Lower leg skin (tissue), 4 donors: ENCODE measurements at regions of chr9 and their contacts with region 1.

Region 1: DNA sequence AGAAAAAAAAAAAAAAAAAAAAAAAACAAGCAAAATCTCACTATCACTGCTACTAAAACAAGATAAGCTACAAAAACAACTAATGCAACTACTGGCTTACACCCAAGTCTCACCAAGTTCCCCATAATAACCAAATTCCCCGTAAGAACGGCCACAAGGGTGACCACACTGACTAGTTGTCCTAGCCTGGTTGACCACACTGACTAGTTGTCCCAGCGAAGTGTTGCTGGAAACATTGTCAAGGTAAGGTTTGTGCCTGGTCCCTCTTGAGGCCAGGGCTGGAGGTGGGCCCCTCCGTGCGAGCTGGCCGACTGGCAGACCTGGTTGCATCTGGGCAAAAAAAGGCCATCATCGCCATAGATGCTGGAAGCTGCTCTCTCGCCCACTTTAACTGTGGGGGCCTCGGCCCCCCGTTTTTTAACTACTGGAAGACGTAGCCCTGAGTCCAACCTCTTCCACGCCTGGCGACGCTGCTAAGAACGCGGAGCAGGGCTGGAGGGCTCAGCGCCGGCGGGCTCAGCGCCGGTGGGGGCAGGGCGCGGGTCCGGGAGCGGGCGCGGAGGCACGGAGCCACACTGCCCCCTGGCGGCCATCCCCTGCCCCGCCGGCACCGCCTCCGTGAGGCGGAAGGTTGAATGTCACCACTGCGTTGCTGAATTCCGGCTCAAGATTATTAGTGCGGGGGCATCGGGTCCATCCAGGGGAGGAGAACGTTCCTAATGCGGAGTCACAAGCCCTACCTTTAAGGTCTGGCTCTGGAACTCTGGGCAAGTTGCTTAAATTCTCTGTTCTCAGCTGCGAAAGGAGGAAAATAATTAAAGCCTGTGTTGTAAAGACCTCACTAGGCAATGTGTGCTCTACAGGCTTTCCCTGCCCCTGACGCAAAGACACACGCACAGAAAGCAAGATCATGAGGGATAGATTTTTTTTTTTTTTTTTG is 84.0 kb downstream of the HSD17B3 start:
- DNase-seq: peak; percentile 43 to 94
- H3K4me3 ChIP-seq: no peak overlapping the region
- CTCF ChIP-seq: peak in 1 of 3 donors; percentile 73
- POLR2A ChIP-seq: no peak

Region 2: GRCh38 chr9:94668418-94668932 is 1549.5 kb before region 1 on chr9:
- intact Hi-C with region 1: loop called (anchors 10 kb)
- DNase-seq: no peak
- H3K4me3 ChIP-seq: no peak overlapping the region
- CTCF ChIP-seq: no peak
- POLR2A ChIP-seq: no peak